Lower lobe of right lung (tissue), 2 donors: ENCODE measurements at regions of chr3 and their contacts with region 1.

Region 1: GRCh38 chr3:138915503-138916498 is 31.1 kb downstream of the FOXL2 start:
- DNase-seq: peak; percentile 96
- ATAC-seq: peak; percentile 97 to 98
- H3K4me3 ChIP-seq: peak overlapping the region; percentile 78
- H3K27ac ChIP-seq: peak overlapping the region; percentile 97
- H3K4me1 ChIP-seq: peaks cover 17% of the 10 kb centered on the region
- H3K27me3 ChIP-seq: no peaks in the 10 kb centered on the region
- CTCF ChIP-seq: peak; percentile 89

Region 2: GRCh38 chr3:138594150-138594934 is 321.5 kb before region 1 on chr3 and contains the start of gene CEP70:
- intact Hi-C with region 1: loop called (anchors 10 kb)
- DNase-seq: peak; percentile 96
- ATAC-seq: peak; percentile 97 to 98
- H3K4me3 ChIP-seq: peak within 1 kb of the TSS; percentile 74
- H3K27ac ChIP-seq: peak within 1 kb of the TSS; percentile 88
- H3K4me1 ChIP-seq: peaks cover 10% of the 10 kb centered on the region
- H3K27me3 ChIP-seq: no peaks in the 10 kb centered on the region
- CTCF ChIP-seq: peak; percentile 90
- total RNA-seq, gene CEP70: 45.2 TPM

Region 3: DNA sequence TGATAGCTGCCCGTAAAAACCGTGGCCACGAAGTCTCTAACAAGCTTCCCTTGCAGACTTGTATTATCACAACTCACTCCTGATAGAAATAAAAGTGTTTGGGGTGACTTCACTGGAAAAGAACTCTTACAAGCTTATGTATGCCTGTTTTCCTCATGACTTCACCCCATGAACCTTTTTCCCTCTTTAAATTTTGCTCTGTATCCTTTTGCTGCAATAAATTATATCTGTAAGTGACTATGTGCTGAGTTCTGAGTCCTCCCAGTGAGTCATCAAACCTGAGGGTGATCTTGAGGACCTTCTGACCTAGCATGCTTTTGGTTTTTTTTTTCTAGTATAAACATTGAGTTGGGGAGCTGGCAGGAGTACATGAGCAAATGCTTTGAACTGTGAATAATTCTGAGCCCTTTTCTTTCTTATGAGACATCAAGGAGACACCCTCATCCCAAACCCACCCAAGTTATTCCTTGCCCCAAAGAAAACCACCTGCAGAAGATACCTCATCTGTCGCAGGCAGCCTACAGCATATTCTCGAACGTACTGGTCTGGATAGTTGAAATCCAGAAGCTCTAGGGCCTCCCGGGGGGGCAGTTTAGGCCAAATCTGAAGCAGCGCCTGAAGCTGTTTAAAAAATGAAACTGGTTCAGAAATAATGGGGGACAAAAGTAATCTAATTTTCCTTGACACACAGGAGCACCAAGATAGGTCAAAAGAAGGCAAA is 221.4 kb before region 1 on chr3:
- intact Hi-C with region 1: loop called (anchors 10 kb)
- DNase-seq: no peak
- ATAC-seq: peak; percentile 65 to 86
- H3K4me3 ChIP-seq: no peak overlapping the region
- H3K27ac ChIP-seq: no peak overlapping the region
- H3K4me1 ChIP-seq: no peaks in the 10 kb centered on the region
- H3K27me3 ChIP-seq: no peaks in the 10 kb centered on the region
- CTCF ChIP-seq: no peak